Activated T-helper 2 cell treated with anti-CD3 and anti-CD28 coated beads, Interferon-gamma antibody, Interleukin-2, Interleukin-4, amounts not matched to agents 10 μg/mL and 5 μg/mL and 100 μg/mL, durations not matched to agents 14 hours and 24 hours and 36 hours (primary cell): ENCODE measurements at regions of chr9 and their contacts with region 1.

Region 1: GRCh38 chr9:29575219-29575618 is 2001.9 kb upstream of the C9orf72 start:
- DNase-seq: no peak
- H3K4me3 Mint-ChIP-seq: no peak overlapping the region
- H3K27ac Mint-ChIP-seq: no peak overlapping the region
- H3K4me1 Mint-ChIP-seq: no peaks in the 10 kb centered on the region
- H3K27me3 Mint-ChIP-seq: no peaks in the 10 kb centered on the region

Region 2: DNA sequence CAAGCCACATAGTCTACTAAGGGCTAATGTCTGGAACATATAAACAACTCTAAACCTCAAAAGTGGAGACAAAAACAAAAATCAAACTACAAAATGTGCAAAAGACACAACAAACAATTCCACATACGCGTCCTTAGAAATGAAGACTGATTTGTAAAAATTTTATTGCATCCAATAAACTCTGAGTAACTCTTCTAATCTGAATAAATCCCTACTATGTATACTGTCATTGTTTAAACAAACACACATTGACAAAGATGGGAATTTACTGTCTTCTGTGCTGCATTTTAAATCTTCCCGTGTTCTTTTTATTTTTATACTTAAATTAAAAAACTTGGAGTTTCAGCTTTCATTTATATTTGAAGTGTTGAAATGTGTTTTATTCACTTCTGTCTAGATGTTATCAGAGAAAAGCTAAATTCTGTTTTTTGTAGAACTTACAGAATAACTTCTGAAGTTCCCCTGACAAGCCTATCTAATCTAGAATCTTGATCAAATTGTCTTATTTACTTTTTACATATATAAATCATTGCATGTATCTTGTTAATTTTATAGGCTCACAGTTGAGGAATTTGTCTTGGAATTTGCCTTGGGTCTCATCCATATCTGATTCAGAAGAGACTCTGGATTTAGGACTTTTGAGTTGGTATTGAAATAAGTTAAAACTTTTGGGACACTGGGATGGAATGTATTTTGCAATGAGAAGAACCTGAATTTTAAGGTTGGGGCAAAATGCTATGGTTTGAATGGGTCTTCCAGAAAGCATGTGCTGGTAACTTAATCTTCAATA is 62.4 kb after region 1 on chr9:
- intact Hi-C with region 1: loop called (anchors 10 kb)
- DNase-seq: no peak
- H3K4me3 Mint-ChIP-seq: no peak overlapping the region
- H3K27ac Mint-ChIP-seq: no peak overlapping the region
- H3K4me1 Mint-ChIP-seq: no peaks in the 10 kb centered on the region
- H3K27me3 Mint-ChIP-seq: no peaks in the 10 kb centered on the region

Region 3: GRCh38 chr9:29668732-29669131 is 93.5 kb after region 1 on chr9:
- intact Hi-C with region 1: no loop called
- DNase-seq: no peak
- H3K4me3 Mint-ChIP-seq: no peak overlapping the region
- H3K27ac Mint-ChIP-seq: no peak overlapping the region
- H3K4me1 Mint-ChIP-seq: no peaks in the 10 kb centered on the region
- H3K27me3 Mint-ChIP-seq: no peaks in the 10 kb centered on the region